ENCODE measurements at regions of chr1 and their contacts with region 1.

Region 1: DNA sequence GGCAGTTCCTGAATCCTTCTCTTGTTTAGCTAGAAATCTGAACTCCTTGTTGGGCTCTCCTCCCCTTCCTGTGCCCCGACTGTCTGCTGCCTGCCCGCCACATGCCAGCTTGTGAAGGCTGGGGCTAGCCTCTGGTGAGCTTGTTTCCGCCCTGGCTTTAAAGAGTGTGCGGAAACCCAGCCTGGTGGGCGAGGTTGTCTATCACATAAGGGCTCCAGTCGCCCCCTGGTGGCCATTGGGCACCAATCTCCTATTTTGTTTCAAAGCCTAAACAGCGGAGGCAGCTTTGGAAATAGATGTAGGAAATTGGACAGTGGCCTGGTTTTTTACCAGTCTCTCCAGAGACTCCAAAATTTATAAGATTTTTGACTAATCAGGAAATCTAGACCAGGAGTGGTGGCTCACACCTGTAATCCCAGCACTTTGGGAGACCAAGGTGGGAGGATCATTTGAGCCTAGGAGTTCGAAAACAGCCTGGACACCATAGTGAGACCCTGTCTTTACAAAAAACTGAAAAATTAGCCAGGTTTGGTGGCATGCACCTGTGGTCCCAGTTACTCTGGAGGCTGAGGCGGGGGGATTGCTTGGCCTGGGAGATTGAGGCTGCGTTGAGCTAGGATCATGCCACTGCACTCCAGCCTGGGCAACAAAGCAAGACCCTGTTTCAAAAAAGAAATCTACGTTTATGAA is 9.8 kb downstream of the ATP8B2 start:
- DNase-seq: peak; percentile 80
- H3K4me3 ChIP-seq: no peak overlapping the region
- CTCF ChIP-seq: peak; percentile 89

Region 2: GRCh38 chr1:154206196-154206595 is 129.0 kb before region 1 on chr1 and contains the start of gene CFAP141:
- in situ Hi-C with region 1: no loop called
- DNase-seq: no peak
- H3K4me3 ChIP-seq: no peak within 1 kb of the TSS
- CTCF ChIP-seq: no peak

Region 3: DNA sequence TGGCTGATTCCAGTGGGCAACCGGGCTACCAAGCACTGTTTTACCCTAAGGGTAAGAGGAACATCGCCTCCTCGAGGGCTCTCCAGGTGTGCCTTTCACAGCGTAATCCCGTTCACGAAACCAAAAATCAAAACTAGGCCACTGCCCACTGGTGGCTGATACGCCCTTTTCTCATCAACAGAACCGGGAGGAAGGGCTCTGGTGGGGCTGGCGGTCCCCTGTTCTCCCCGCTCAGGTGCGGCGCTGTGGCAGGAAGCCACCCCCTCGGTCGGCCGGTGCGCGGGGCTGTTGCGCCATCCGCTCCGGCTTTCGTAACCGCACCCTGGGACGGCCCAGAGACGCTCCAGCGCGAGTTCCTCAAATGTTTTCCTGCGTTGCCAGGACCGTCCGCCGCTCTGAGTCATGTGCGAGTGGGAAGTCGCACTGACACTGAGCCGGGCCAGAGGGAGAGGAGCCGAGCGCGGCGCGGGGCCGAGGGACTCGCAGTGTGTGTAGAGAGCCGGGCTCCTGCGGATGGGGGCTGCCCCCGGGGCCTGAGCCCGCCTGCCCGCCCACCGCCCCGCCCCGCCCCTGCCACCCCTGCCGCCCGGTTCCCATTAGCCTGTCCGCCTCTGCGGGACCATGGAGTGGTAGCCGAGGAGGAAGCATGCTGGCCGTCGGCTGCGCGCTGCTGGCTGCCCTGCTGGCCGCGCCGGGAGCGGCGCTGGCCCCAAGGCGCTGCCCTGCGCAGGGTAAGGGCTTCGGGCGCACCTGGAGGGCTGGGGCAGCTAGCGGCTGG is 70.0 kb after region 1 on chr1 and contains the start of gene IL6R:
- in situ Hi-C with region 1: loop called (anchors 10 kb)
- DNase-seq: peak; percentile 89
- H3K4me3 ChIP-seq: peak within 1 kb of the TSS; percentile 52
- CTCF ChIP-seq: peak; percentile 61